Thyroid gland (tissue), 4 donors: ENCODE measurements at regions of chr14 and their contacts with region 1.

Region 1: GRCh38 chr14:90815822-90816700 is at the start of gene TTC7B:
- DNase-seq: peak; percentile 34 to 47
- H3K4me3 ChIP-seq: peak within 1 kb of the TSS in 2 of 3 donors; percentile 25 to 46
- H3K27ac ChIP-seq: no peak within 1 kb of the TSS
- H3K4me1 ChIP-seq: peaks cover 5 to 11% of the 10 kb centered on the region in 2 donors
- H3K27me3 ChIP-seq: no peaks in the 10 kb centered on the region
- CTCF ChIP-seq: peak in 2 of 6 experiments; percentile 26 to 69
- POLR2A ChIP-seq: no peak
- total RNA-seq, gene TTC7B: 19.1 to 87.6 (median 22.1) TPM

Region 2: DNA sequence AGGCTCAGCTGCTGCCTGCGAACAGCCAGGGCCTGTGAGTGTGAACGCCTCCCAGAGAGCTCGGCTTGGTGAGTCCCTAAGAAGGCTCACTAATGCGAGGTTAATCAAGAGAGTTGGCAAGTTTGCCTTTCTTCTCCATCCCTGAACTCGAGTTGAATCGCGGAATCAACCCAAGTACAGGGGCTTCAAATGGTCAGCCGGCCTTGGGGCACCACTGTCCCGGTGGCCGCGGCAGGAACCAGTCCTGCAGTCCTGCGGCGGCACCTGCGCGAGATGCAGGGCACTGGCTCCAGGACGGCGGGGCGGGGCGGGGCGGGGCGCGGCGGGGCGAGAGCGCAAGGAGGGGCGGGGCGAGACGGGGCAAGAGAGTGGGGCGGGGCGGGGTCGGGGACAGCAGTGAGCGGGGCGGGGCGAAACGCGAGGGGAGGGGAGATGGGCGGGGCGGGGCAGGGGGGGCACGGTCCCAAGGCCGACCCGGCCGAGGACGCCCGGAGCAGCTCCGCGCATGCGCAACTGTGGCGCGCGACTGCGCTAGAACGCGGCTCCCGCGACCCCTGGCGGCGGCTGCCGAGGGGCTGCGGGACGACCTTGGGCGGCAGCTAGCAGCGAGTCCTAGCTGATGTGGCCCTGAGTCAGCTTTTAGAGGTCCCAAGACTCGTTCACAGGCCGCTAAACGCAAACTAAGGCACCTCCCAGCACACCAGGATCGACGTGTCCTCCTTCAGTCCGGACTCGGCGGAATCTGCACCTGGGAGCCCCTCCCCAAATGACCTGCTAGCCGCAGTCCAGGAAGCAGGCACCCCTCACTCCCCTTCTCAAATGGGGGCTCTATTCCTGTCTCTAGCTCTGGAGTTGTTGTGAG is 57.8 kb before region 1 on chr14:
- intact Hi-C with region 1: loop called (anchors 5 kb)
- DNase-seq: peak; percentile 89 to 92
- H3K4me3 ChIP-seq: peak overlapping the region in 1 of 3 donors; percentile 52
- H3K27ac ChIP-seq: peak overlapping the region; percentile 73 to 93 (median 88)
- H3K4me1 ChIP-seq: peaks cover 5 to 15% of the 10 kb centered on the region in 2 donors
- H3K27me3 ChIP-seq: no peaks in the 10 kb centered on the region
- CTCF ChIP-seq: peak; percentile 61 to 95 (median 78)
- POLR2A ChIP-seq: peak in 1 of 2 donors; percentile 64